Naive thymus-derived CD4-positive, alpha-beta T cell (primary cell): ENCODE measurements at regions of chr7 and their contacts with region 1.

Region 1: GRCh38 chr7:104923010-104923421 is 91.0 kb upstream of the KMT2E start:
- DNase-seq: peak; percentile 40 to 69 (median 62)
- ATAC-seq: peak; percentile 94
- H3K4me3 ChIP-seq: no peak overlapping the region
- H3K4me3 Mint-ChIP-seq: no peak overlapping the region
- H3K27ac ChIP-seq: no peak overlapping the region
- H3K27ac Mint-ChIP-seq: peak overlapping the region in 5 of 9 donors; percentile 46 to 68 (median 55)
- H3K4me1 ChIP-seq: no peaks in the 10 kb centered on the region
- H3K4me1 Mint-ChIP-seq: peaks cover 0 to 7% (median 2%) of the 10 kb centered on the region in 7 donors
- H3K27me3 ChIP-seq: no peaks in the 10 kb centered on the region
- H3K27me3 Mint-ChIP-seq: peaks cover 0 to 6% (median 0%) of the 10 kb centered on the region in 5 donors

Region 2: DNA sequence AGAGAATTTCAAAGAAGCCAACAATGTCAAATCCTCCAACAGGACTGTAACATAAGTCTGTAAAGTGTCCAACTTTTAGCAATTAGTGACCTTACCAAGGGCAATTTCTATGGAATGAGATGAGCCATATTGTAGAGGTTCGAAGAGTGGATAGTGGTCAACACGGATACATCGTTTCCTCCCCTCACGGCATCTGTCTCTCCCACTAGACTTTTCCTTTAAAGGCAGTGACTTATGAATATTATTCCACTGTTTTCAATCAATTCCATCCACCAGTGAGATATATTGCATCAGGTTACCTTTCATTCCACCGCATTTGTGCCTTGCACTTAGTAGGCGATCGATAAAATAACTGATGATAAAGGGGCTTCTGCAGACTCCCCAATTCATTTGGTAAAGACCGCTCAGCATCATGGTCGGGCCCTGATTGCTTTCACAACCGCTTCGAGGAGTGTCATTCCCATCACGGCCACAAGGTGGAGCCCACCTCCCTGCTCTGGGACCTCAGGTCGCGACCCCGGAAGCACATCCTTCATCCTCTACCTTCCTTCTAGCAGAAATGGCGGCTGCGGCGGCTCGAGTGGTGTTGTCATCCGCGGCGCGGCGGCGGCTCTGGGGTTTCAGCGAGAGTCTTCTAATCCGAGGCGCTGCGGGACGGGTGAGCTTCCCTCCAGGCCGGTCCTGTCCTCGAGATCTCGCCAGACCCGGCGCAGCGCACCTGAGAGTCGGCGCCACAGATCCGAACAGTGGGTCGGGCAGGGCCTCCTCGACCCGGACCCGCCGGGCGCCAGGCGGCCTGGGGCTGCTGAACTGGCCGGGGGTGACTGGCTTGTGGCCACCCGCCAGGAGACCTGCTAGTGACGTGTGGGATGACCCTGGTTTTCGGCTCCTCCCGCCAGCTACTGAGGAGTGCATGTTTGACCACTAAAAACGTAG is 1625.8 kb before region 1 on chr7 and contains the start of gene PMPCB:
- CTCF ChIA-PET with region 1: no interaction called
- POLR2A ChIA-PET with region 1: no interaction called
- intact Hi-C with region 1: loop called in 1 of 2 experiments (anchors 5 kb)
- DNase-seq: peak; percentile 87 to 95 (median 94)
- ATAC-seq: peak; percentile 100
- H3K4me3 ChIP-seq: peak within 1 kb of the TSS; percentile 80
- H3K4me3 Mint-ChIP-seq: peak within 1 kb of the TSS; percentile 83 to 96 (median 90)
- H3K27ac ChIP-seq: peak within 1 kb of the TSS; percentile 90
- H3K27ac Mint-ChIP-seq: peak within 1 kb of the TSS; percentile 80 to 94 (median 92)
- H3K4me1 ChIP-seq: peaks cover 16 to 19% of the 10 kb centered on the region in 2 donors
- H3K4me1 Mint-ChIP-seq: peaks cover 18 to 50% (median 36%) of the 10 kb centered on the region in 7 donors
- H3K27me3 ChIP-seq: no peaks in the 10 kb centered on the region
- H3K27me3 Mint-ChIP-seq: peaks cover 0 to 9% (median 0%) of the 10 kb centered on the region in 5 donors
- total RNA-seq, gene PMPCB: 55.2 to 94.1 (median 68.3) TPM

Region 3: GRCh38 chr7:103573479-103574058 is 1349.4 kb before region 1 on chr7:
- CTCF ChIA-PET with region 1: interaction called, 3 read pairs
- POLR2A ChIA-PET with region 1: no interaction called
- intact Hi-C with region 1: loop called in 1 of 2 experiments (anchors 1 kb)
- DNase-seq: peak in 6 of 9 donors; percentile 3 to 35 (median 23)
- ATAC-seq: no peak
- H3K4me3 ChIP-seq: no peak overlapping the region
- H3K4me3 Mint-ChIP-seq: no peak overlapping the region
- H3K27ac ChIP-seq: no peak overlapping the region
- H3K27ac Mint-ChIP-seq: no peak overlapping the region
- H3K4me1 ChIP-seq: no peaks in the 10 kb centered on the region
- H3K4me1 Mint-ChIP-seq: no peaks in the 10 kb centered on the region
- H3K27me3 ChIP-seq: no peaks in the 10 kb centered on the region
- H3K27me3 Mint-ChIP-seq: peaks cover 11 to 19% (median 15%) of the 10 kb centered on the region in 5 donors

Region 4: DNA sequence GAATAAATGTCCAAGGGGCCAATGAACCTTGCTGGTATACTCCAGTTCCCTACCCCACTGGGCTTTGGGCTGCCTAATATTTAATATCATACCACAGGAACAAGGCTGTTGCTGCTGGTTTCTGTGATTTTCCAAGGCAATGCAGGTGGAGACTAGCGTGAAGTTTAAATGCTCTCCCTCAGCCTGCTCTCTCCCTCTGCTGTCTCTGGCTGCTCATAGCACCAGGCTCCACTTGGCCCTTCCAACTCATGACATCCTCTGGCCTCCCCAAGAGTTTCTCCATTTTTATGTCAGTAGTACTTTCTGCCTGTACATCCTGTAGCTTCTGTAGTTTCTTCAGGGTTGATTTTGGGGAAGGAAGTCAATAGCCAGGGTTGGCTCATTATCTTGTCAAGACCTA is 491.1 kb before region 1 on chr7:
- CTCF ChIA-PET with region 1: no interaction called
- POLR2A ChIA-PET with region 1: no interaction called
- intact Hi-C with region 1: no loop called
- DNase-seq: no peak
- ATAC-seq: no peak
- H3K4me3 ChIP-seq: no peak overlapping the region
- H3K4me3 Mint-ChIP-seq: no peak overlapping the region
- H3K27ac ChIP-seq: no peak overlapping the region
- H3K27ac Mint-ChIP-seq: no peak overlapping the region
- H3K4me1 ChIP-seq: no peaks in the 10 kb centered on the region
- H3K4me1 Mint-ChIP-seq: no peaks in the 10 kb centered on the region
- H3K27me3 ChIP-seq: no peaks in the 10 kb centered on the region
- H3K27me3 Mint-ChIP-seq: peaks cover 0 to 23% (median 19%) of the 10 kb centered on the region in 5 donors

Region 5: GRCh38 chr7:104643587-104644217 is 279.3 kb before region 1 on chr7:
- CTCF ChIA-PET with region 1: no interaction called
- POLR2A ChIA-PET with region 1: no interaction called
- intact Hi-C with region 1: loop called in 1 of 2 experiments (anchors 5 kb)
- DNase-seq: no peak
- ATAC-seq: no peak
- H3K4me3 ChIP-seq: no peak overlapping the region
- H3K4me3 Mint-ChIP-seq: no peak overlapping the region
- H3K27ac ChIP-seq: no peak overlapping the region
- H3K27ac Mint-ChIP-seq: no peak overlapping the region
- H3K4me1 ChIP-seq: no peaks in the 10 kb centered on the region
- H3K4me1 Mint-ChIP-seq: no peaks in the 10 kb centered on the region
- H3K27me3 ChIP-seq: no peaks in the 10 kb centered on the region
- H3K27me3 Mint-ChIP-seq: peaks cover 0 to 36% (median 35%) of the 10 kb centered on the region in 5 donors

Region 6: DNA sequence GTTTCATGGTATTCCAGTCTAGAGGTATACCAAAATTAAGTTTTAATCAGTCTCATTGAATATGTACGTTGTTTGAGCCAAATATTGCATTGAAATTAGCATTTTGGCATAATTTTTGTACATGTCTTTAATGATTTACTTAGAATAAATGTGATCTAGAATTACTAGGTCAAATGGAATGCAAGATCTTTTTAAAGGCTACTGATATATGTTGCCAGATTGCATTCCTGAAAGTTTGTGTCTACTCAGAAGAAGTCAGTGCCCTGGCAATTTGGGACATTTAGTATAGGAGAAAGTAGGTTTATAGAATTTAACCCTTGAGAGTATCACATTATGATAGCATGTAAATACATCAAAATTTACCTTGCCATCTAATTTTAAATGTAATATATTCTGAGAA is 123.4 kb after region 1 on chr7:
- CTCF ChIA-PET with region 1: no interaction called
- POLR2A ChIA-PET with region 1: no interaction called
- intact Hi-C with region 1: loop called (anchors 1 to 5 kb)
- DNase-seq: no peak
- ATAC-seq: no peak
- H3K4me3 ChIP-seq: no peak overlapping the region
- H3K4me3 Mint-ChIP-seq: peak overlapping the region in 1 of 10 donors; percentile 44
- H3K27ac ChIP-seq: no peak overlapping the region
- H3K27ac Mint-ChIP-seq: peak overlapping the region in 6 of 9 donors; percentile 6 to 71 (median 42)
- H3K4me1 ChIP-seq: peaks cover 9 to 10% of the 10 kb centered on the region in 2 donors
- H3K4me1 Mint-ChIP-seq: peaks cover 32 to 76% (median 59%) of the 10 kb centered on the region in 7 donors
- H3K27me3 ChIP-seq: no peaks in the 10 kb centered on the region
- H3K27me3 Mint-ChIP-seq: no peaks in the 10 kb centered on the region

Region 7: DNA sequence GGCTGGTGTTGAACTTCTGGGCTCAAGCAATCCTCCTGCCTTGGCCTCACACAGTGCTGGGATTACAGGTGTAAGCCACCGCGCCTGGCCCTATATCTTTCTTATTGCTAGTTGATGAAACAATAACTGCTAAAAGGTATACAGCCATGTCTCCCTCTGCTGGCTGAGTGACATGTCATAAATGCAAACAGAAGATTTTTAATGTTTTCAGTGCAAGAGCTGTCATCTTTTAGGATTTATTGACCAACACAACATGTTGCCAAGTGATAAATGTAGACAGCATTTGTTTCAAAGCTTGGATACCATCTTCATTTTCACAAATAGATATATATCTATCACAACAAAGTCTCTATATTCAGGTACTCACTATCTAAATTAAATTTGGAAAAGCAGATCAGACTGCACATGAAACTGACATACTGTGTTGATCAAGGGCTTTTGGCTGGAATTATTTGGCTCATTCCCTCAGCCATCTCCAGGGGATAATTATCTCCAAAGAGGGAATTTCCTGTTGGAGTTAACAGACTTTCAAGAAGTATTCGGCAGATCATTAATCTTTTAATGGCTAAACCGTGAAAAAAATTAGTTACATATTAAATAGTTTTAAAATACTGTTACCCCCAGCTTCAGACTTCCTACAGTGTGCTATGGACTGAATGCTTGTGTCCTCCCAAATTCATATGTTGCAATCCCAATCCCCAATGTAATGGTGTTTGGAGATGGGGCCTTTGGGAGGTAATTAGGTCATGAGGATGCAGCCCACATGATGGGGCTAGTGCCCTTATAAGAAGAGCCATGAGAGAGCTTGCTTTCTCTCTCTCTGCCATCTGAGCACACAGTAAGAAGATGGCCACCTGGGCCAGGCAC is 507.0 kb after region 1 on chr7:
- CTCF ChIA-PET with region 1: no interaction called
- POLR2A ChIA-PET with region 1: no interaction called
- intact Hi-C with region 1: loop called (anchors 1 kb)
- DNase-seq: peak in 8 of 9 donors; percentile 9 to 66 (median 58)
- ATAC-seq: peak; percentile 76
- H3K4me3 ChIP-seq: no peak overlapping the region
- H3K4me3 Mint-ChIP-seq: no peak overlapping the region
- H3K27ac ChIP-seq: no peak overlapping the region
- H3K27ac Mint-ChIP-seq: peak overlapping the region in 1 of 9 donors; percentile 19
- H3K4me1 ChIP-seq: no peaks in the 10 kb centered on the region
- H3K4me1 Mint-ChIP-seq: peaks cover 0 to 5% (median 0%) of the 10 kb centered on the region in 7 donors
- H3K27me3 ChIP-seq: no peaks in the 10 kb centered on the region
- H3K27me3 Mint-ChIP-seq: no peaks in the 10 kb centered on the region